AG04450 (cell line): ENCODE measurements at regions of chr12 and their contacts with region 1.

Region 1: GRCh38 chr12:79766705-79767464 is 76.1 kb upstream of the PAWR start:
- DNase-seq: no peak
- H3K4me3 ChIP-seq: no peak overlapping the region
- H3K27ac ChIP-seq: no peak overlapping the region
- H3K27me3 ChIP-seq: no peaks in the 10 kb centered on the region
- CTCF ChIP-seq: no peak

Region 2: GRCh38 chr12:79897617-79898016 is 130.7 kb after region 1 on chr12:
- CTCF ChIA-PET with region 1: no interaction called
- POLR2A ChIA-PET with region 1: no interaction called
- DNase-seq: peak; percentile 73
- H3K4me3 ChIP-seq: no peak overlapping the region
- H3K27ac ChIP-seq: no peak overlapping the region
- H3K27me3 ChIP-seq: no peaks in the 10 kb centered on the region
- CTCF ChIP-seq: no peak

Region 3: DNA sequence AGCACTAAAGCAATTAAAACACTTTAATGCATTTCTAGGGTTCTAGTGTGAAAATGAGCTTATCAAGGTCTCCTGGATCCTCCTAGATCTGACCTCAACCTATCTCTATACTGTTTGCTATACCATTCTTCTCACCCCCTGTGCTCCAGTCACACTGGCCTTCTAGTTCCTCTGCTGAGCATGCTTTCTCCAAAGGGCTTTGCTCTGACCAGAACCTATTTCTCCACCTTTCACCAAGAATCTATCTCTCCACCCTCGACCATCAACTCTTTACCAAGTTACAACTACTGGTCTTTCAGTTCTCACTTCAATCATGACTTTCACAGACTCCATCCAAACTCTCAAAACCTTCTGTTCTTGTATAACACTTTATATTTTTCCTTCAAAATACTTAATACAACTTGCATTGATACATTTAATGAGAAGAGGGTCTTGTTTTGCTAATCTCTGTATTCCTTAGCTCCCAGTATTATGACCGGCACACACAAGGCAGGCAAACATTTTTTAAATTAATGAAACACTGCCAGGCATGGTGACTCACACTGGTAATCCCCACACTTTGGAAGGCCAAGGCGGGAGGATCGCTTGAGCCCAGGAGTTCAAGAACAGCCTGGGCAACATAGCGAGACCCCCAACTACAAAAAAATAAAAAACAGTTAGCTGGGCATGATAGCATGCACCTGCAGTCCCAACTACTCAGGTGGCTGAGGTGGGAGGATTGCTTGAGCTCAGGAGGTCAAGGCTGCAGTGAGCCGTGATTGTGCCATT is 145.2 kb after region 1 on chr12:
- CTCF ChIA-PET with region 1: no interaction called
- POLR2A ChIA-PET with region 1: interaction called, 10 read pairs
- DNase-seq: no peak
- H3K4me3 ChIP-seq: no peak overlapping the region
- H3K27ac ChIP-seq: no peak overlapping the region
- H3K27me3 ChIP-seq: no peaks in the 10 kb centered on the region
- CTCF ChIP-seq: no peak

Region 4: DNA sequence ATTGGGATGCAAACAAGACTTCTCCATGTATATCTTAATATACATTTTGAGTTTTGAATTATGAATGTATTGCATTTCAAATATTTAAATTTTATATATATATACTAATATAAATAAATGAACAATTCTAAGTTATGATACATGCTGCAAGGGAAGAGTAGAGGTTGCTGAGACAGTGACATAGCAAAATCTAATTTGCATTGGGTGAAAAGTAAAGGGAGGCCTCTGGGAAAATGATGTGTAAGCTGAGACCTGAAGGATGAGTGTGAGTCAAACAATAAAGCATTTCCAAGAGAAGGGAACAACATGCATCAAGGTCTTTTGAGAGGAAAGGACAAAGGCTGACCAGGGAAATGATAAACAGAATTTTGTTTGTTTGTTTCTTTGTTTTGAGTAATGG is 614.2 kb after region 1 on chr12:
- CTCF ChIA-PET with region 1: no interaction called
- POLR2A ChIA-PET with region 1: no interaction called
- DNase-seq: no peak
- H3K4me3 ChIP-seq: no peak overlapping the region
- H3K27ac ChIP-seq: no peak overlapping the region
- H3K27me3 ChIP-seq: no peaks in the 10 kb centered on the region
- CTCF ChIP-seq: no peak